AG04450 (cell line): ENCODE measurements at regions of chr4 and their contacts with region 1.

Region 1: GRCh38 chr4:118352843-118353533 is at the start of gene PRSS12:
- DNase-seq: peak; percentile 41
- H3K4me3 ChIP-seq: peak within 1 kb of the TSS; percentile 84
- H3K27ac ChIP-seq: peak within 1 kb of the TSS; percentile 52
- H3K27me3 ChIP-seq: no peaks in the 10 kb centered on the region
- CTCF ChIP-seq: peak; percentile 74
- polyA plus RNA-seq, gene PRSS12: 142 and 155 TPM in 2 replicates

Region 2: GRCh38 chr4:118270492-118270891 is 82.5 kb before region 1 on chr4:
- CTCF ChIA-PET with region 1: interaction called, 12 read pairs
- POLR2A ChIA-PET with region 1: no interaction called
- DNase-seq: no peak
- H3K4me3 ChIP-seq: no peak overlapping the region
- H3K27ac ChIP-seq: no peak overlapping the region
- H3K27me3 ChIP-seq: no peaks in the 10 kb centered on the region
- CTCF ChIP-seq: peak; percentile 52

Region 3: DNA sequence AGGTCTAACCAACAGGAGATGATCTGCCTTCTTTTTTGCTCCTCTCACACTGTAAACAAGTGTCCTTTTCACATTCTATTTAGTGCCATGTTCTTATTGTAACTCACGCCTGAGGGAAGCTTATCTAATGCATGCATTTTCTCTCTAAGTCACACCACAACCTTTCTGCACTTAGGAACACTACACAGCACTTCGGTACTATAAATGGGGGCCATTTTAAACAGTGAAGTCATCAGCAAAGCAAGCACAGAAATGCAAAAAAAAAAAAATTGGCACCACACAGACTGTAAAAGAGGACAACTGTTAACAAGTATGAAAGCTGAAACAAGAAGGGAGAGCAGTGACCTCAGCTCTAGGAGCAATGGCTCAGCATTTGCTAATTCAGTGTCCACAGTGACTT is 45.3 kb before region 1 on chr4:
- CTCF ChIA-PET with region 1: interaction called, 13 read pairs
- POLR2A ChIA-PET with region 1: no interaction called
- DNase-seq: no peak
- H3K4me3 ChIP-seq: no peak overlapping the region
- H3K27ac ChIP-seq: no peak overlapping the region
- H3K27me3 ChIP-seq: no peaks in the 10 kb centered on the region
- CTCF ChIP-seq: no peak

Region 4: GRCh38 chr4:118327554-118328241 is 25.3 kb before region 1 on chr4:
- CTCF ChIA-PET with region 1: interaction called, 19 read pairs
- POLR2A ChIA-PET with region 1: no interaction called
- DNase-seq: no peak
- H3K4me3 ChIP-seq: no peak overlapping the region
- H3K27ac ChIP-seq: no peak overlapping the region
- H3K27me3 ChIP-seq: no peaks in the 10 kb centered on the region
- CTCF ChIP-seq: no peak

Region 5: GRCh38 chr4:118367872-118368271 is 14.9 kb after region 1 on chr4:
- CTCF ChIA-PET with region 1: interaction called, 46 read pairs
- POLR2A ChIA-PET with region 1: interaction called, 5 read pairs
- DNase-seq: no peak
- H3K4me3 ChIP-seq: no peak overlapping the region
- H3K27ac ChIP-seq: no peak overlapping the region
- H3K27me3 ChIP-seq: no peaks in the 10 kb centered on the region
- CTCF ChIP-seq: no peak

Region 6: DNA sequence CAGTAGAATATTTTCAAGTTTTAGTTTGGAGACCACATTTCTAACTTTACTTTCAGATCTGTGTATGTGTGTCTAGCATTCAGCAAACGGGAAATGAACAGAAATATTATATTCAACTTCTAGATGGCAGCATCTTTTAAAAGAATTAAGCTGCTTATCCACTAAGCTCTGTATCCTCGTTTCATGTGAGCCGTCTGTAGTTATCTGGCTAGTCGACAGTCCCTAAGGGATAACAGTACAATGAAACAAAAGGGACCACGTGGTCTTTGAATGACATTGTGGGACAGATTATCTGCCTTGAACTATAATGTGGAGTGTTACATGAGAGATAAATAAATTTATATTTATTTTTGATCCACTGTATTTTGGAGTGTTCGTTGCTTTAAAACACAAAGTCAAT is 35.6 kb after region 1 on chr4:
- CTCF ChIA-PET with region 1: interaction called, 14 read pairs
- POLR2A ChIA-PET with region 1: no interaction called
- DNase-seq: no peak
- H3K4me3 ChIP-seq: no peak overlapping the region
- H3K27ac ChIP-seq: no peak overlapping the region
- H3K27me3 ChIP-seq: no peaks in the 10 kb centered on the region
- CTCF ChIP-seq: no peak

Region 7: GRCh38 chr4:118417325-118417724 is 64.3 kb after region 1 on chr4:
- CTCF ChIA-PET with region 1: interaction called, 18 read pairs
- POLR2A ChIA-PET with region 1: interaction called, 3 read pairs
- DNase-seq: peak; percentile 34
- H3K4me3 ChIP-seq: no peak overlapping the region
- H3K27ac ChIP-seq: no peak overlapping the region
- H3K27me3 ChIP-seq: no peaks in the 10 kb centered on the region
- CTCF ChIP-seq: no peak